Activated CD8-positive, alpha-beta memory T cell treated with anti-CD3 and anti-CD28 coated beads, Interleukin-2, amount 10 ng/mL, durations not matched to agents 7 days and 5 days (primary cell): ENCODE measurements at regions of chr17 and their contacts with region 1.

Region 1: GRCh38 chr17:28726226-28727130 is at the start of gene TLCD1:
- DNase-seq: peak; percentile 96
- ATAC-seq: peak; percentile 65
- H3K4me3 Mint-ChIP-seq: peak within 1 kb of the TSS; percentile 91
- H3K27ac Mint-ChIP-seq: peak within 1 kb of the TSS; percentile 94
- H3K4me1 Mint-ChIP-seq: peaks cover 51% of the 10 kb centered on the region
- H3K27me3 Mint-ChIP-seq: no peaks in the 10 kb centered on the region
- total RNA-seq, gene TLCD1: 3.2 to 5.6 TPM

Region 2: DNA sequence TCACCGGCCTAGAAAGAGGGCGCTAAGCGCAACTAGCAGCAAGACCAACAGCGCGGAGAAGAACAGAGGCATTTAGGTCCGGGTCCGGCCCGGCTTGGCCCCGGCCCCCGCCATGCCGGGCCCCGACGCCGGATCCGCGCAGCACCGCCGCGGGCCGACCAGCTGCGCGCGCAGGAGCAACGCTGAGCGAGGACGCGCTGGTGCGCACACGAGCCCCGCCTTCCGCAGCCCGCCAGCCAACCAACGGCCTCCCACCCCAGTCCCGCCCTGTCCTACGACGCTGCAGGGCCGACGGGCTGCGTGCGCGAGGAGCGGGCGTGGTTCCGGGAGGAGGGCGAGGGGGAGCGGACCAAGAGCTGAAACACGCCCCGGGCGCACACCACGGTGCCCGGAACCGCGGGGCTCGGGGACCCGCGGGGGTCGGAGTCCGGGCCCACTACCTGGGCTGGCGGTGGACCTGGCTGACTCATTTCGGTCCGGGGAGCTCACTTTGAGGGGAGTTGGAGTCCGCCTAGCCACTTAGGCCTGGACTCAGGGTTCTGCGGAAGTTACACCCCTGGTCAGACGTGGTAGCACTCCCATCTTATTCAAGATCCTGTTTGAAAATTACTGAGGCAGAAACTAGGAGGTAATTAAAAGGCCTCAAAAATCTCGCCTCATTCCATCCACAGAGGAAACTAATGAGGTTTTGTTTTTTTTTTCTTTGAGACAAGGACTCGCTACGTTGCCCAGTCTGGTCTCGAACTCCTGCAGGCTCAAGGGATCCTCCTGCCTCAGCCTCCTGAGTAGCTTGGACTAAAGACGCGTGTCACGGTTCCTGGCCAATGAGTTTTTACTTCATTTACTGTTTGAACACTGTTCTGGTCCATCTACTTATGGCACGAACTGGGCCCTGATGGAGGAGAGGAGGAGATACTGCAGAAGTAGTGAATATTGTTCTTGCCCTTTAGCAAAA is 81.2 kb before region 1 on chr17 and contains the start of gene BLTP2:
- CTCF ChIA-PET with region 1: interaction called, 48 read pairs
- DNase-seq: peak; percentile 98
- ATAC-seq: peak; percentile 98
- H3K4me3 Mint-ChIP-seq: peak within 1 kb of the TSS; percentile 86
- H3K27ac Mint-ChIP-seq: peak within 1 kb of the TSS; percentile 92
- H3K4me1 Mint-ChIP-seq: peaks cover 38% of the 10 kb centered on the region
- H3K27me3 Mint-ChIP-seq: no peaks in the 10 kb centered on the region
- total RNA-seq, gene BLTP2: 163 to 186 TPM

Region 3: GRCh38 chr17:28684963-28685362 is 41.5 kb before region 1 on chr17:
- CTCF ChIA-PET with region 1: no interaction called
- DNase-seq: no peak
- ATAC-seq: no peak
- H3K4me3 Mint-ChIP-seq: no peak overlapping the region
- H3K27ac Mint-ChIP-seq: no peak overlapping the region
- H3K4me1 Mint-ChIP-seq: no peaks in the 10 kb centered on the region
- H3K27me3 Mint-ChIP-seq: no peaks in the 10 kb centered on the region

Region 4: DNA sequence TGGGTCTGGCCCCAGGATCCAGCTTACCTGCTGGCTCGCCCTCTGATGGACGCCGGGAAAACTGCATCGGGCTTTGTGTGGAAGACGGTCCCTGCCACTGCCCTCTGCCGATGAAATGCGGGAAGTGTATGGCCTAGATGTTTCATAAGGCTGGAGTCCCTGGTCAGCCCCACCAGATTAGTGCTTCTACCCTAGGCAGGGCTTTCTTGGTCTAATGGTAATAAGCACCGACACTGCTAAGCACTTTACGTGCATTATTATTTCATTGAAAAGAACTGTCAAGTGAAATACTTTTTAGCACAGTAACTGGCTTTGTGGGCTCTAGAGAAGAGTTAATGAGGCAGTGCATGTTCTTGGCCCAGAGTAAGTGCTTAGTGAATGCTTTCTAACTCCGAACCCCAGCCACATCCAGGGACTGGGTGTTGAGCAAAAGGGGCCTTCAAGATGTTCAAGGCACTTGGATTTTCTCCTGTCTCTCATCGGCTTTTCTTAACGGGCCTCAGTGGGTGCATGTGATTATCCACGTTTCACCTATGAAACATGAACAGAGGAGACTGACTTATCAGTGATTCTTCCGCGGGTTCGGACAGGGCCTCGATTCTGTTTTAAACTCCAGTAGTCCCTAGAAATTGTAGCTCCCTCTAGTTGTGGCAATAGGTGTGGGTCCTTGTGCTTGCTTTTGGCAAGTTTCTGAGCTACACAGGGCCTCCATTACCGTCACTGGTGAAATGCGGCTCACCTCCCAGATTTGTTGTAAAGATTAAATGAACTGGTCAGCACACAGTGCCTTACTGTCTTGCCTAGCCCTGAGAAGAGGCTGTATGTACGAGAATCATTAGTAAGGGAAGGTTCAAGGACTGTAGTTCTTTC is 23.9 kb after region 1 on chr17:
- CTCF ChIA-PET with region 1: interaction called, 591 read pairs
- DNase-seq: peak; percentile 93
- ATAC-seq: peak; percentile 88
- H3K4me3 Mint-ChIP-seq: no peak overlapping the region
- H3K27ac Mint-ChIP-seq: no peak overlapping the region
- H3K4me1 Mint-ChIP-seq: peaks cover 34% of the 10 kb centered on the region
- H3K27me3 Mint-ChIP-seq: no peaks in the 10 kb centered on the region

Region 5: DNA sequence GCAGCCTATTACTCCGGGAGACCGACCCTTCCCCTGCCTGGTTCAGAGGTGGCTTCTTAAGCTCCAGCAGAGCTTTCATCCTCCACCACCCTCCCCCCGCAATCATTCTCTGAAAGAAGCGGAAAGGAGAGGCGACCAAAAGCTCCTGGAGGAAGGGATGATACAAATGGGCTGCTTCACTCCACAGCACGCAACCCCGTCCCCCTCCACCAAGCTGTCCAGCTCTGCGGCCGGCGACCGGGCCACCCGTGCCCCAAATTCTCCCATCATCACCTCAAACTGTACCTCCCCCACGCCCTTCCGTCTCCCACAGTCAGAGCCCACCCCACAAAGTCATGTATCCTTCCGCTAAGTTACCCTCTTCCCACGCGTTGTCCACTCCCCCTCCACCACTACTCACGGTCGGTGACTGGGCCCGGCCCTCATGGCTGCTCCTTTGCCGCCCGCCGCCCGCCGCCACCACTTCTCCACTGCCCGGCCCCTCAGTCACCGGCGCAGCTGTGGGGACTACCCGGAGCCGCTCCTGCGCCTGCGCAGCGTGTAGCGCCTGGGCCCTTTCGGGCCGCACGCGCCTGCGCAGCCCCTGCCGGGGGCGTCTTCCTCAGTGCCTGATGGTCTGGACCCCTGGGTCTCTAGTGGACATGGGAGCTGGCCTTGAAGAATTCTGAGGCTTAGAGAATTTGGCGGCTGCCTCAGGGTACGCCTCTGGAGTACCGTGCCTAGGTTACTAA is 116.0 kb after region 1 on chr17 and contains the start of gene FAM222B:
- CTCF ChIA-PET with region 1: interaction called, 29 read pairs
- DNase-seq: peak; percentile 90
- ATAC-seq: peak; percentile 100
- H3K4me3 Mint-ChIP-seq: peak within 1 kb of the TSS; percentile 99
- H3K27ac Mint-ChIP-seq: peak within 1 kb of the TSS; percentile 96
- H3K4me1 Mint-ChIP-seq: peaks cover 21% of the 10 kb centered on the region
- H3K27me3 Mint-ChIP-seq: no peaks in the 10 kb centered on the region
- total RNA-seq, gene FAM222B: 14.5 to 19.6 TPM

Region 6: GRCh38 chr17:28889996-28890395 is 163.5 kb after region 1 on chr17:
- CTCF ChIA-PET with region 1: interaction called, 20 read pairs
- DNase-seq: no peak
- ATAC-seq: no peak
- H3K4me3 Mint-ChIP-seq: no peak overlapping the region
- H3K27ac Mint-ChIP-seq: peak overlapping the region; percentile 27
- H3K4me1 Mint-ChIP-seq: peaks cover 42% of the 10 kb centered on the region
- H3K27me3 Mint-ChIP-seq: no peaks in the 10 kb centered on the region

Region 7: GRCh38 chr17:28908640-28909167 is 182.2 kb after region 1 on chr17:
- CTCF ChIA-PET with region 1: interaction called, 21 read pairs
- DNase-seq: no peak
- ATAC-seq: no peak
- H3K4me3 Mint-ChIP-seq: no peak overlapping the region
- H3K27ac Mint-ChIP-seq: peak overlapping the region; percentile 13
- H3K4me1 Mint-ChIP-seq: peaks cover 7% of the 10 kb centered on the region
- H3K27me3 Mint-ChIP-seq: no peaks in the 10 kb centered on the region

Region 8: GRCh38 chr17:28951991-28952975 is 225.8 kb after region 1 on chr17:
- CTCF ChIA-PET with region 1: interaction called, 112 read pairs
- DNase-seq: peak; percentile 98
- ATAC-seq: peak; percentile 73
- H3K4me3 Mint-ChIP-seq: no peak overlapping the region
- H3K27ac Mint-ChIP-seq: no peak overlapping the region
- H3K4me1 Mint-ChIP-seq: peaks cover 16% of the 10 kb centered on the region
- H3K27me3 Mint-ChIP-seq: no peaks in the 10 kb centered on the region